Activated CD4-positive, alpha-beta T cell treated with anti-CD3 and anti-CD28 coated beads, Interleukin-2, amount 10 ng/mL, durations not matched to agents 24 days and 14 days (primary cell): ENCODE measurements at regions of chr2 and their contacts with region 1.

Region 1: GRCh38 chr2:69741619-69742466 is at the start of gene ANXA4:
- DNase-seq: peak; percentile 92
- H3K4me3 Mint-ChIP-seq: peak within 1 kb of the TSS; percentile 91
- H3K27ac Mint-ChIP-seq: peak within 1 kb of the TSS; percentile 92
- H3K4me1 Mint-ChIP-seq: peaks cover 29% of the 10 kb centered on the region
- H3K27me3 Mint-ChIP-seq: peaks cover 12% of the 10 kb centered on the region
- total RNA-seq, gene ANXA4: 47.4 and 49.0 TPM in 2 replicates

Region 2: GRCh38 chr2:69764286-69765095 is 22.6 kb after region 1 on chr2:
- intact Hi-C with region 1: loop called (anchors 2 kb)
- DNase-seq: no peak
- H3K4me3 Mint-ChIP-seq: peak overlapping the region; percentile 67
- H3K27ac Mint-ChIP-seq: peak overlapping the region; percentile 86
- H3K4me1 Mint-ChIP-seq: peaks cover 50% of the 10 kb centered on the region
- H3K27me3 Mint-ChIP-seq: no peaks in the 10 kb centered on the region

Region 3: DNA sequence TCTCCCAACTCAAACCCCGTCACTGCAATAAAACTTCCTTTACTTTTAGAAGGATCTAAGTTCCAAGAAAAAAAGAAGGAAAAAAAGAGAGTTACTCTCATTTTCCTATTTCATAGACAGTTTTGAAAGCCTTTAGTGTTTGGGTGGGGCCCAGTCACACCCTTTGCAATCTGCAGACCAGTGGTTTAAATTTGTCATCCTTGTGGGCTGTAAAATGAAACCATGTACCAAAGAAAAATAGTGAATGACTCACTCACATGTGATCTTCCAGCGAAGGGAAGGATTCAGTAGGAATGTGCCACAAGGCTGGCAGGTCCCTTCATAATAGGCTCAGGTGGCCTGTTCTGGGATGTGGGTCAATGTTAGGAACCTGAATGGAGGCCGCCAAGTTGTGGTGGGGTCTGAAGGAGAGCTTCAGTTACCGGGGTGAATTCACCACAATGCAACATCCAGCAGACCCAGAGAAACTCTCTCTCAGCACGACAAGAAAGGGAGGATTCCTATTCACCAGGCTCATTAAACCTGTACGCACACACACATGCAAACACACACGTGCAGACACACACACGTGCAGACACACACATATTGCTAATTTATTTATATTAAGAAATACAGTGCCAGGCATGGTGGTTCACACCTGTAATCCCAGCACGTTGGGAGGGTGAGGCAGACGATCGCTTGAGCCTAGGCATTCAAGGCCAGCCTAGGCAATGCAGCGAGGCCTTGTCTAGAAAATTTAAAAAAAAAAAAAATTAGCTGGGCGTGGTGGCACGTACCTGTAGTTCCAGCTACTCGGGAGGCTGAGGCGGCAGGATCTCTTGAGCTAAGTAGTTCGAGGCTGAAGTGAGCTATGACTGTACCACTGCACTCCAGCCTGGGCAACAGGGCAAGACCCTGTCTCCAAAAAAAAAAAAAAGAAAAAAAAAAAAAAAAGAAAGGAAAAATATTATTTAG is 28.6 kb after region 1 on chr2:
- intact Hi-C with region 1: loop called (anchors 1 kb)
- DNase-seq: peak; percentile 80
- H3K4me3 Mint-ChIP-seq: peak overlapping the region; percentile 29
- H3K27ac Mint-ChIP-seq: peak overlapping the region; percentile 77
- H3K4me1 Mint-ChIP-seq: peaks cover 66% of the 10 kb centered on the region
- H3K27me3 Mint-ChIP-seq: no peaks in the 10 kb centered on the region

Region 4: GRCh38 chr2:69816923-69817542 is 75.2 kb after region 1 on chr2:
- intact Hi-C with region 1: loop called (anchors 5 kb)
- DNase-seq: peak; percentile 93
- H3K4me3 Mint-ChIP-seq: no peak overlapping the region
- H3K27ac Mint-ChIP-seq: no peak overlapping the region
- H3K4me1 Mint-ChIP-seq: peaks cover 5% of the 10 kb centered on the region
- H3K27me3 Mint-ChIP-seq: no peaks in the 10 kb centered on the region

Region 5: GRCh38 chr2:70607121-70607561 is 865.3 kb after region 1 on chr2:
- intact Hi-C with region 1: no loop called
- DNase-seq: peak; percentile 41
- H3K4me3 Mint-ChIP-seq: no peak overlapping the region
- H3K27ac Mint-ChIP-seq: no peak overlapping the region
- H3K4me1 Mint-ChIP-seq: no peaks in the 10 kb centered on the region
- H3K27me3 Mint-ChIP-seq: peaks cover 21% of the 10 kb centered on the region